ENCODE measurements at regions of chr2 and their contacts with region 1.

Region 1: GRCh38 chr2:54665436-54665856 is 58.0 kb upstream of the EML6 start:
- DNase-seq: no peak
- H3K4me3 ChIP-seq: no peak overlapping the region
- CTCF ChIP-seq: no peak
- POLR2A ChIP-seq: no peak

Region 2: GRCh38 chr2:54855434-54855833 is 190.0 kb after region 1 on chr2:
- intact Hi-C with region 1: no loop called
- DNase-seq: no peak
- H3K4me3 ChIP-seq: no peak overlapping the region
- CTCF ChIP-seq: no peak
- POLR2A ChIP-seq: no peak

Region 3: GRCh38 chr2:55049043-55049793 is 383.8 kb after region 1 on chr2:
- intact Hi-C with region 1: loop called (anchors 2 kb)
- DNase-seq: peak; percentile 92 to 98
- H3K4me3 ChIP-seq: peak overlapping the region; percentile 82
- CTCF ChIP-seq: peak in 1 of 3 donors; percentile 76
- POLR2A ChIP-seq: peak in 1 of 2 donors; percentile 3

Region 4: DNA sequence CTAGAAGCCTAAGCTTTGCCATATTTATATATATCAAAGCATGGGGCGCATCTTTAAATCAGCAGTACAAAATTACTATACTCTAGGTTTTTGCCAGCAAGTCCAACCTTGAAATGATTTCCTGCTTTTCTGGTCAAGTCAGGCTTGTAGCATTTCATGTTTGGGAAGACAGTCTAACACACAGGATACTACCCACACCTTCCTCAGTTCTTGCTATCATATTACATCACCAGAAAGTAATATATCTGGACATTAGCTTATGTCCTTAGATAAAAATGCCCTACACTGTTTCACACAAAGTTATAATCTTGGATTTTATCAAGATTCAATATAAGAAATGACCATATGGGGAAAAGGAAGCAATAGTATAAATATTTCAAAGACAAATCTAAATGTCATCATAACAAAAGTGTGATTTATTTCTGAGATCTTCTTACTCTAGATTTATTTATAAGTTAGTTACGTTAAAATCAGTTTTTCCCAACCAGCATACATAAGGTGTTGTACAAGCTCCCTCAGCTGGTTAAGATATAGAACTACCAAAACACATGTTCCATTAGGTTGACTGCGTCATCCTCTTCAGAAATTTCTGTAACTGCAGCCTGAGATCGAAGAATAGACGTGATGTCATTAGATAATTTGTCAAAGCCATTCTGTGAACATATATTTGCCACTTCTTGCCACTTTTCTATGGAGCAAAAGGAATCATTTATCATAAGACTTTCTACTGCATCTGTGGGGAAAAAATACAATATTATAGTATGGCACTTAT is 510.0 kb after region 1 on chr2:
- intact Hi-C with region 1: loop called (anchors 10 kb)
- DNase-seq: no peak
- H3K4me3 ChIP-seq: no peak overlapping the region
- CTCF ChIP-seq: no peak
- POLR2A ChIP-seq: no peak

Measured in lower leg skin (tissue), 4 donors.